Activated CD4-positive, alpha-beta T cell treated with anti-CD3 and anti-CD28 coated beads, Interleukin-2, amount 10 ng/mL, durations not matched to agents 7 days and 5 days (primary cell): ENCODE measurements at regions of chr22 and their contacts with region 1.

Region 1: DNA sequence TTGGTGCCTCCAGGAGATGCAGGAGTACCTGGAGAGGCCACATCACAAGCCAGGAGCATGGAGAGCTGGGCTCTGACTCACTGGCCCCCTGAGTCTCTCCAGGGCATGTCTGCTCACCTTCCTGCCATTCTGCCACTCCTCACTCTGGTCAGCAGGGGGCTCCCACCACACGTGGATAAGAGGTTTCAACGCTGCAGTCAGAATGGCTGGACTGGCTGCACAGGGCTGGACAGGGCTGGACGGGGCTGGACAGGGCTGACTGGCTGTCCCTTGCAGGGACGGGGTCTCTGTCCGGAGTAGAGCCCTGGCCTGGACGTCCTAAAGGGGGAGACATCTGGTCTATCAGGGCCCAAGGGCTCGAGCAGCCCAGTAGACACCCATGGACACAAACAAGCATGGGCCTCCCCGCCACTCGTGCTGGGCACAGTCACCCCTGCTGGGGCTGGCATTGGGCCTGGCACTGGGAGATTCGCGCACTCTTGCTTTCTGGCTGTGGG is 34.6 kb downstream of the CYTH4 start:
- DNase-seq: peak; percentile 81
- H3K4me3 Mint-ChIP-seq: no peak overlapping the region
- H3K27ac Mint-ChIP-seq: no peak overlapping the region
- H3K4me1 Mint-ChIP-seq: peaks cover 40% of the 10 kb centered on the region
- H3K27me3 Mint-ChIP-seq: peaks cover 5% of the 10 kb centered on the region

Region 2: GRCh38 chr22:37212167-37212906 is 104.6 kb before region 1 on chr22 and contains the start of gene SSTR3:
- CTCF ChIA-PET with region 1: no interaction called
- POLR2A ChIA-PET with region 1: no interaction called
- DNase-seq: no peak
- H3K4me3 Mint-ChIP-seq: no peak within 1 kb of the TSS
- H3K27ac Mint-ChIP-seq: no peak within 1 kb of the TSS
- H3K4me1 Mint-ChIP-seq: peaks cover 57% of the 10 kb centered on the region
- H3K27me3 Mint-ChIP-seq: no peaks in the 10 kb centered on the region
- total RNA-seq, gene SSTR3: 10.1 to 10.2 TPM

Region 3: GRCh38 chr22:37253126-37253660 is 63.7 kb before region 1 on chr22:
- CTCF ChIA-PET with region 1: no interaction called
- POLR2A ChIA-PET with region 1: no interaction called
- DNase-seq: no peak
- H3K4me3 Mint-ChIP-seq: no peak overlapping the region
- H3K27ac Mint-ChIP-seq: no peak overlapping the region
- H3K4me1 Mint-ChIP-seq: peaks cover 9% of the 10 kb centered on the region
- H3K27me3 Mint-ChIP-seq: peaks cover 7% of the 10 kb centered on the region

Region 4: DNA sequence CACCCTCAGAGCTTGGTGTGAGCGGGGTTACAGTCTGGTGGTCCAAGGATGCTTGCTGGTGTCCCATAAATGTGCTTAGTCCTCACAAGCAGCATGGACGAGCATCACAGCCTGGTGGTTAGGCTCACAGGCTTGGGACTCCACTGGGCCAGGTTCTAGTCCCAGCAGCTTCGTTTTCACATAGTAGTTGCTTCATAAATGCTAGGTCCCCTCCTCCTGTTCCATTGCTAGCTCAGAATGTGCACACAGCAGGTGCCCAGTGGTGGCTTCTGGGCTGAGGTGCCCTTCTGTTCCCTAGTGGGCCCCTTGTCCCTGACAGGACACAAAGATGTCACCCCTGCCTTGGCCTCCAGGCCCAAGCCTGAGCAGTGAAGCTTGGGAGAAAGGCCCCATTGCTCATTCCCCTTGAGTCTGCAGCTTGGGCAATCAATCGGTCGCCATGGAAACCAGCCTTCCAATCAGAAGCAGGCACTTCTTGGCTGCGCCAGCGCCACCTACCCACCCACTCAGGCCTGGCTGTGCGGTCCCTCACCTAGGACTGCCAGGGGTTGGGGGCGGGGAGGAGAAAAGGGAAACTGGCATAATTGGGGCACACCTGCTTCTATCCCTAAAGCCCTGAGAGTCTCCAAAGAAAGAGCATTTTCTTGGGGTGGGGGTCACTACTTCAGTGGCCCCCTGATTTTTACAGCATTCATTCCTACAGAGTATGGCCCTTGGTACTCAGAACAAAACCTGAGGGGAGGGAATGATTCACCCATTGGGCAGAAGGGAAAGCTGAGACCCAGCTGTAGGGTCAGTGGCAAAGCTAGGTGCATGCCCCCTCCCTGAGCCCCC is 13.5 kb after region 1 on chr22:
- CTCF ChIA-PET with region 1: interaction called, 17 read pairs
- POLR2A ChIA-PET with region 1: no interaction called
- DNase-seq: peak; percentile 50
- H3K4me3 Mint-ChIP-seq: no peak overlapping the region
- H3K27ac Mint-ChIP-seq: no peak overlapping the region
- H3K4me1 Mint-ChIP-seq: peaks cover 2% of the 10 kb centered on the region
- H3K27me3 Mint-ChIP-seq: peaks cover 65% of the 10 kb centered on the region